CD4-positive, alpha-beta memory T cell (primary cell): ENCODE measurements at regions of chr12 and their contacts with region 1.

Region 1: GRCh38 chr12:64890873-64891468 is 66.5 kb downstream of the TBC1D30 start:
- DNase-seq: peak in 4 of 5 donors; percentile 50 to 56 (median 54)
- H3K4me3 ChIP-seq: no peak overlapping the region
- H3K4me3 Mint-ChIP-seq: no peak overlapping the region
- H3K27ac ChIP-seq: no peak overlapping the region
- H3K27ac Mint-ChIP-seq: no peak overlapping the region
- H3K4me1 ChIP-seq: no peaks in the 10 kb centered on the region
- H3K4me1 Mint-ChIP-seq: no peaks in the 10 kb centered on the region
- H3K27me3 ChIP-seq: no peaks in the 10 kb centered on the region
- H3K27me3 Mint-ChIP-seq: peaks cover 13 to 22% of the 10 kb centered on the region in 2 donors

Region 2: DNA sequence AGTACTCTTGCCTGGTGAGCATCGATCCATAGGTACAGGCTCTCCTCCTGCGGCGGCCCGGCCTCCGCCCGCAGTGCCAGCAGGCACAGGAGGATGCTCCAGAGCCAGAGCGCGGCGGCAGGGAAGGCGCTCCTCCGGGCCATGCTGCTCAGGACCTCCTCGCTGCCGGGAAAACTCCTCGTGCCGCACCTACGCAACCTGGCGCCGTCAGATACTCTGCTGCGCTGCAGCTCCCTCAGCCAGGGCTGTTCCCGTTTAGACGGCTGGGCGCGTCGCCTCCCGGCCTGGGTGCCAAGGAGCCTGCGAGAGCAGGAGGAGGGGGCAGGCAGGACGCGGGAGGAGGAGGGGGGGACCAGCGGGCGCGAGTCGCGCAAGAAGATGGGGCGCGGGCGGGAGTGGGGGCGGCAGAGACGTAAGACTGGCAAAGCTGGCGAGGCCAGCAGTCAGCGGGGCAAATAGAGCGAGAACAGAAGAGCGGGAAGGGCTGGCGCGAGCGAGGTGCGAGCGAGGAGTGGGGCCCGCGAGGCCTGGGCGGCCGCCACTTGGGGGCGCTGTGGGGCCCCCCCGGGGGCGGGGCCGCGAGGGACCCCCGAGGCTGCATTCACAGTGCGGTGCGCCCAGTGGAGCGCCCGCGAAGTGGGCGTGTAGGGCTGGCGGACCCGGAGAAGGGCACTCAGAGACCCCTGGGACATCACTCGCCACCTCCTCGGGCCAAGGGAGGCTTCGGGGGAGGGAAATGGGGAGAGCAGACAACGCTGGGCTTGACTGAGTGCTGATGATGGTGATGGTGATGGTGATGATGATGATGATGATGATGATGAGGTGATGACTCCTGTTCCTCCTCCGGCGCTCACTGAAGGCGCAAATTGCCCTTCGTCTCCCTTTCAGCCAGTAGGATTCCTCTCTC is 230.3 kb after region 1 on chr12 and contains the start of gene WIF1:
- CTCF ChIA-PET with region 1: no interaction called
- POLR2A ChIA-PET with region 1: no interaction called
- intact Hi-C with region 1: loop called (anchors 5 kb)
- DNase-seq: peak in 1 of 5 donors; percentile 2
- H3K4me3 ChIP-seq: no peak within 1 kb of the TSS
- H3K4me3 Mint-ChIP-seq: peak within 1 kb of the TSS in 7 of 8 donors; percentile 53 to 73 (median 61)
- H3K27ac ChIP-seq: no peak within 1 kb of the TSS
- H3K27ac Mint-ChIP-seq: no peak within 1 kb of the TSS
- H3K4me1 ChIP-seq: peaks cover 7% of the 10 kb centered on the region
- H3K4me1 Mint-ChIP-seq: peaks cover 1 to 13% (median 5%) of the 10 kb centered on the region in 4 donors
- H3K27me3 ChIP-seq: peaks cover 9% of the 10 kb centered on the region
- H3K27me3 Mint-ChIP-seq: peaks cover 26 to 27% of the 10 kb centered on the region in 2 donors
- total RNA-seq, gene WIF1: not detected

Region 3: GRCh38 chr12:65986047-65986446 is 1095.1 kb after region 1 on chr12:
- CTCF ChIA-PET with region 1: interaction called, 28 read pairs
- POLR2A ChIA-PET with region 1: no interaction called
- intact Hi-C with region 1: loop called (anchors 1 kb)
- DNase-seq: no peak
- H3K4me3 ChIP-seq: no peak overlapping the region
- H3K4me3 Mint-ChIP-seq: no peak overlapping the region
- H3K27ac ChIP-seq: no peak overlapping the region
- H3K27ac Mint-ChIP-seq: no peak overlapping the region
- H3K4me1 ChIP-seq: no peaks in the 10 kb centered on the region
- H3K4me1 Mint-ChIP-seq: no peaks in the 10 kb centered on the region
- H3K27me3 ChIP-seq: no peaks in the 10 kb centered on the region
- H3K27me3 Mint-ChIP-seq: peaks cover 4 to 6% of the 10 kb centered on the region in 2 donors

Region 4: DNA sequence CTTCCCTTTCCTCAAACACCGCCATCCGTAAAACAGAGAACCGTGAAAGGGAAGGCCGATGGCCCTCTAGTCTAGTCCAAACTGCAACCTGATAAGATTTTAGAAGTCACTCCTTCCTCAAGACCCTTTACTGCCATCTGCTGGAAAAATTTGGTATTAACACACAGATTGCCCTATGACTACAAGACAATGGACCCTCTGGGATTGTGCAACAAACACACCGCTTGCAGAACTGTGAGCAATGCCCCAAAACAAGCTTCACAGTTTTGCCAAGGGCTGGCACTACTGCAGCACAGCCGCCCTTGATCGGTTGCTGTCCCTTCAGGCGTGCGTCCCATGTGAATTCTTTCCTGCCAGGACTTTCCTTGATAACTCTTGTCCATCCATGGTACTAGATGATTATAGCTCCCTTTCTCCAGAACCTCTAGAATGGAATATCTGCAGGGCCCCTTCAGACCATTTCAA is 1216.5 kb after region 1 on chr12:
- CTCF ChIA-PET with region 1: interaction called, 24 read pairs
- POLR2A ChIA-PET with region 1: no interaction called
- intact Hi-C with region 1: no loop called
- DNase-seq: peak; percentile 66 to 73 (median 69)
- H3K4me3 ChIP-seq: no peak overlapping the region
- H3K4me3 Mint-ChIP-seq: no peak overlapping the region
- H3K27ac ChIP-seq: no peak overlapping the region
- H3K27ac Mint-ChIP-seq: no peak overlapping the region
- H3K4me1 ChIP-seq: peaks cover 3% of the 10 kb centered on the region
- H3K4me1 Mint-ChIP-seq: peaks cover 2 to 6% (median 4%) of the 10 kb centered on the region in 4 donors
- H3K27me3 ChIP-seq: no peaks in the 10 kb centered on the region
- H3K27me3 Mint-ChIP-seq: peaks cover 13 to 19% of the 10 kb centered on the region in 2 donors